Tibial artery (tissue), 4 donors: ENCODE measurements at regions of chr5 and their contacts with region 1.

Region 1: DNA sequence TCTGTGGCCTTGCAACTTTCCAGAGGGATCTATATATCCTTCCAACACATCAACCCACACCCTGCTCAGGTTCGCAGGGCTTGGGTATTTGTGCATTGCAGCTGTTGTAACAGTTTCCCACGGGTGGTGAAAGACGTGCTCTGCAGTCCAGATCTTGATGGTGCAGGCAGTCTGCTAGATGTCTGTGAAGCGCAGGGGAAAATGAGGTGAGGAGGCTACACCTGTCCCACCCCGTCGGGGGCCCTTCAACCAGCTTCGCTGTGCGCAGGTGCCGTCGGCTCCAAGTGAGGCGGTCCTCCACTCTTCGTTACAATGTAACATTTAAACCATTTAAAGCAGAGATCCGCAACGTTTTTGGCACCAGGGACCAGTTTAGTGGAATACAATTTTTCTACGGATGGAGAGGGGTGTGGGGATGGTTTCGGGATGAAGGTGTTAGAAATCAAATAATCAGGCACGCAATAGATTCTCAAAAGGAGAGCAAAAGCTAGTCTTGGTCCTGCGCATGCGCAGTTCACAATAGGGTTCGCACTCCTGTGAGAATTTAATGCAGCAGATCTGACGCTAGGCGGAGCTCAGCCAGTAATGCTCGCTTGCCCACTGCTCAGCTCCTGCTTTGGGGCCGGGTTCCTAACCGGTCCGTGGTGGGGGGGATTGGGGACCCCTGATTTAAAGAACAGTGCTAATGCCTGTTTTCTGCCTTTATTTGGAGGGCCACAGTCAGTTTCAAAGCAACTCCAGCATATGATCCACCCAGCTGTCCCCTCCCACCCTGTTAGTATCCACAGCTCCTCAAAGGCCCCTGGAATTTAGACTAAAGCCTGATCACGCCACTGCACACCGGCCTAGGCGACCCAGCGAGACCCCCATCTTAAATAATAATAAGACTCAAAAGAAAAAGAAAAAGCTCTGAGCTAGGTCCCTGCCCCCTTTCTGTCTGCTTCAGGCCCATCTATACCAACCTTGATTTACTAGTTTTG is 97.1 kb upstream of the SELENOP start:
- DNase-seq: peak; percentile 86 to 90
- H3K4me3 ChIP-seq: peak overlapping the region; percentile 47 to 48
- H3K27ac ChIP-seq: peak overlapping the region in 1 of 2 donors; percentile 25
- H3K4me1 ChIP-seq: peaks cover 0 to 8% (median 2%) of the 10 kb centered on the region in 4 donors
- H3K27me3 ChIP-seq: peaks cover 0 to 2% of the 10 kb centered on the region in 2 donors
- CTCF ChIP-seq: peak; percentile 85 to 86

Region 2: DNA sequence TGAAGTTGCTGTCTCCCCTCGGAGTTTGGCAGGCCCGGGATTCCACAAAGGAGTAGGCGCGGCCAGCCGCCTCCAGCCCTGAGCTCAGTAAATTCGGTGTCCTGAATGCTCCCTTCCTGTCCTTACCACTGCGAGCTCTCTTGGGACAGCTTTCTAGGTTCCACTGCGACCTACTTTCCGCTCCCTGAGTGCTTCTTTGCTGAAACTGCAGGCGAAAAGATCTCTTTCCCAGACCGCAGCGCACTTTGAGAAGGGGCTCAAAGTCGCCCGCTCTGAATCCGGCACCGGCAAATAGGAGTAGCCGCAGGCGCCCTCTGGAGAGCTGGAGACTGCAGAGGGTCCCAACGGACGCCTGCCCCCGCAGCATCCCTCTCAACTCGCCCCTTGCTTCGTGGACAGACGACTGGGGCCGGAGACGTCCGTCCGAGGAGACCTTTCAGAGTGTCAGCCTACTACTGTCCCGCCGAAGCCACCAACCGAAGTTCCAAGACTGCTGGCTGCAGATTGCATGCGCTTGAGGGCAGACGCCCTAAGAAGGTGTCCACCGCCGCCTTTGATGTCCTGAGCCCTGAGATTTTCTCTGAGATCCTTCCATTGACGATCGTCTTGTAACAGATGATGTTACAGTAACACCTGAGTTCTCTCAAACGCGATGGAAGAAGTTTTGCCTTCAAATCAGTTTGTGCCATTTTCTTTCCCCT is 35.3 kb after region 1 on chr5:
- intact Hi-C with region 1: loop called (anchors 2 kb)
- DNase-seq: no peak
- H3K4me3 ChIP-seq: peak overlapping the region; percentile 28 to 33
- H3K27ac ChIP-seq: no peak overlapping the region
- H3K4me1 ChIP-seq: peaks cover 0 to 16% (median 2%) of the 10 kb centered on the region in 4 donors
- H3K27me3 ChIP-seq: peaks cover 0 to 8% of the 10 kb centered on the region in 2 donors
- CTCF ChIP-seq: no peak

Region 3: DNA sequence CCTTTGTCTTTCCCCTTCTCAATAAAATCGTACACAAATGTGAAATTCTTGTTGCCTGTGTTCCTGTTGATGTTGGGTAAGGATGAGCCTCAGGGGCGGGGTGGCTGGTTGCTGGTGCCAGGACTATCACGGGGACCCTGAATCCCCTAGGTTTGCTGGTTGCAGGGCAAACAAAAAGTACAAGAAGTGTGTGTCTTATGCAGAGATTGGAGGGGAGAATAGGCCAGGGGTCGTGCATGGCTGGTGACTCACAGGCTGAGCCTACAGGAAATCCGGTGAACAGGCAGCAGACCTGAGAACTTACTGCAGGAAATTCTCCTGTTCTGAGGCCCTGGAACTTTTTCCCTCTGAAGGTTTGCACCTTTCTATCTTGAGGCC is 125.8 kb after region 1 on chr5:
- intact Hi-C with region 1: no loop called
- DNase-seq: no peak
- H3K4me3 ChIP-seq: no peak overlapping the region
- H3K27ac ChIP-seq: no peak overlapping the region
- H3K4me1 ChIP-seq: peaks cover 0 to 4% (median 0%) of the 10 kb centered on the region in 4 donors
- H3K27me3 ChIP-seq: no peaks in the 10 kb centered on the region
- CTCF ChIP-seq: no peak